Esophagus squamous epithelium (tissue), 5 donors: ENCODE measurements at regions of chr11 and their contacts with region 1.

Region 1: DNA sequence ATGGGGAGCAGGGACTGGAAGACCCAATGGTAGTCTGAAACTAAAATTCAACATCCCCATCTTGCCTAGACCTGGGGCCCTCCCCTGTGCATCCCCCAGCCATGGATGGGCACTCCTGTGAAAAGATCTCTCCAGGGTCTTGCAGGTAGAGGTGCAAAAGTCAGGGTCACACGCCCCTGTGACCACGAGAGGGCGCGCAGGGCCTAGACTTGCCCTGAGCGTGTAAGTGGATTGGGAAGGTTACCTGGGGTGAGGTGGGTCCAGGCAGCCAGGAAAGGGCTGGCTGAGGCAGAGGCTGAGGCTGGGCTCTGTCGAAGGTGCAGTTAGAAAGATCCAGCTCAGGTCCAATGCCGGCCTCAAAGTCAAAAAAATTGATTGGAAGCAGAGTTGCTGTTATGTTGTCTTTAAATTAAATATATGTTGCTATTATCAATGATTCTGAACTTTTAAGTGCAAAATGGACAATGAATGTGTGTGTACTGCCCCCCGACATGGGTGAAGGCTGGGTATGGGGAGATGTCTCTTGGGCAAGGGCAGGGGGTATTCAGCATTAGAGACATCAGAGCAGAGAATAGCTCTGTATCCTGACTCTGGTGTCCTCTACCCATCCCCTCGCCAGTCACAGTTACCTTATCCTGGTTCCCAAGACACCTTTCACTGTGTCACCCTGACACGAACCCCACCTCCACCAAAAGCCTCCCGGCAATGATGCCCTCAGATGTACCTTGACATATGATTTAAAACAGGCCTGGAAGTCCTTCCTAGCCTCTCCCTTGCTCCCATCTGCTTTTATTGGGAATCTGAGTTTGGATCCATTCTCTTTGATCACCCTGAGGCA is 4.7 kb upstream of the POU2F3 start:
- DNase-seq: no peak
- H3K4me3 ChIP-seq: no peak overlapping the region
- H3K27ac ChIP-seq: peak overlapping the region in 2 of 4 donors; percentile 9 to 46
- H3K4me1 ChIP-seq: peaks cover 6 to 29% (median 10%) of the 10 kb centered on the region in 3 donors
- H3K27me3 ChIP-seq: peaks cover 0 to 42% (median 0%) of the 10 kb centered on the region in 4 donors
- CTCF ChIP-seq: peak; percentile 28 to 92 (median 79)
- POLR2A ChIP-seq: no peak

Region 2: GRCh38 chr11:120303004-120303637 is 67.9 kb after region 1 on chr11:
- intact Hi-C with region 1: loop called (anchors 5 kb)
- DNase-seq: no peak
- H3K4me3 ChIP-seq: no peak overlapping the region
- H3K27ac ChIP-seq: peak overlapping the region; percentile 67 to 86 (median 80)
- H3K4me1 ChIP-seq: peaks cover 21 to 80% (median 32%) of the 10 kb centered on the region in 3 donors
- H3K27me3 ChIP-seq: peaks cover 0 to 7% (median 0%) of the 10 kb centered on the region in 4 donors
- CTCF ChIP-seq: peak; percentile 78 to 94 (median 82)
- POLR2A ChIP-seq: no peak

Region 3: GRCh38 chr11:120601536-120601935 is 366.3 kb after region 1 on chr11:
- intact Hi-C with region 1: no loop called
- DNase-seq: no peak
- H3K4me3 ChIP-seq: no peak overlapping the region
- H3K27ac ChIP-seq: no peak overlapping the region
- H3K4me1 ChIP-seq: no peaks in the 10 kb centered on the region
- H3K27me3 ChIP-seq: peaks cover 0 to 13% (median 0%) of the 10 kb centered on the region in 4 donors
- CTCF ChIP-seq: no peak
- POLR2A ChIP-seq: no peak